ENCODE measurements at regions of chr17 and their contacts with region 1.

Region 1: DNA sequence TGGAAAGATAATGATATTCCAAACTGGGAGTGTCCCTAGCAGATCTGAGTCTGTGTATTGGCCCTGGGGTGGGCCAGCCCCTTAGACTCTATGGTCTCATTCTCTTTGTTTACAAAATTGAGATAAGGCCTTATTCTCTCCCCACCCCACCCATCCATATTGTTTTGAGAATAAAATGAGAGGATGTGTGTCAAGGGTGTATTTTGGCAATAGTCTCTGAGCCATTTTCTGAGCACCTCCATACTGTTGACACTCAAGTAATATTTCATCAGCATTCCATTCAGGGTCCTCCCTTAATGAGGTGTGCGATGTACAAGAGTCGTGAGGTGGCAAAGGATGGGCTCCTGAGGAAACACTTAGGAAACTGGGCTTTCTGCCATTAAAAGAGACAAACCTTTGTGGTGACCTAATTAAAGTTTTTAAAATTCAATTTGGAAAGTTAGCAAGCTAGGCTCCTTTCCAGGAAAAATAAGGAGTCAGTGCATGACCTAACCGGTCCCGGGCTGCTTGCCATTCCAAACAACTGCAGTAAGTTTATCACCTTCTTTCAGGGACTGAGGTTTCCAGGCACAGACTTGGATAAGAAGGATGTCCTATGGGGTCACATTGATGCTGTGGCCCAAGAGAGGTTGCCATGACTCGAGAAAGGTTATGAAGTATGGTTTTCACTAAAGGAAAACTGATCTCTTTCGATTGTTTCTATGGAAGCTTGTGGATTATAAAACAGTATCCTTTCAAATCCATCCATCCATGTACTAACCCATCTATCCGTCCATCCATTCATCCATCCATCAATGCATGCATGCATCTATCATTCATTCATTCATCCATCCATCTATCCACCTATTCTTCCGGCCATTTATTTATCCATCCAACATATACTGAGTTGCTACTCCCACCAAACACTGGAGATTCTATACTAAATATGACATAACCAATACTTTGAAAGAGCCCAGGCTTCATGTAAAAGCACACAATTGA is 443.3 kb downstream of the UTP18 start:
- DNase-seq: peak; percentile 69 to 82 (median 77)
- ATAC-seq: peak; percentile 78 to 92 (median 90)
- H3K4me3 ChIP-seq: no peak overlapping the region
- H3K27ac ChIP-seq: peak overlapping the region in 8 of 12 donors; percentile 27 to 71 (median 58)
- H3K4me1 ChIP-seq: peaks cover 0 to 20% (median 6%) of the 10 kb centered on the region in 12 donors
- H3K27me3 ChIP-seq: no peaks in the 10 kb centered on the region
- CTCF ChIP-seq: no peak
- POLR2A ChIP-seq: no peak

Region 2: GRCh38 chr17:51611585-51611984 is 92.1 kb before region 1 on chr17:
- intact Hi-C with region 1: loop called in 1 of 10 experiments (anchors 2 kb)
- DNase-seq: peak in 4 of 5 donors; percentile 28 to 37 (median 29)
- ATAC-seq: peak in 3 of 4 donors; percentile 26 to 92 (median 53)
- H3K4me3 ChIP-seq: no peak overlapping the region
- H3K27ac ChIP-seq: peak overlapping the region in 1 of 12 donors; percentile 2
- H3K4me1 ChIP-seq: peaks cover 0 to 17% (median 0%) of the 10 kb centered on the region in 12 donors
- H3K27me3 ChIP-seq: peaks cover 0 to under 1% (median 0%) of the 10 kb centered on the region in 9 donors
- CTCF ChIP-seq: no peak
- POLR2A ChIP-seq: no peak

Region 3: DNA sequence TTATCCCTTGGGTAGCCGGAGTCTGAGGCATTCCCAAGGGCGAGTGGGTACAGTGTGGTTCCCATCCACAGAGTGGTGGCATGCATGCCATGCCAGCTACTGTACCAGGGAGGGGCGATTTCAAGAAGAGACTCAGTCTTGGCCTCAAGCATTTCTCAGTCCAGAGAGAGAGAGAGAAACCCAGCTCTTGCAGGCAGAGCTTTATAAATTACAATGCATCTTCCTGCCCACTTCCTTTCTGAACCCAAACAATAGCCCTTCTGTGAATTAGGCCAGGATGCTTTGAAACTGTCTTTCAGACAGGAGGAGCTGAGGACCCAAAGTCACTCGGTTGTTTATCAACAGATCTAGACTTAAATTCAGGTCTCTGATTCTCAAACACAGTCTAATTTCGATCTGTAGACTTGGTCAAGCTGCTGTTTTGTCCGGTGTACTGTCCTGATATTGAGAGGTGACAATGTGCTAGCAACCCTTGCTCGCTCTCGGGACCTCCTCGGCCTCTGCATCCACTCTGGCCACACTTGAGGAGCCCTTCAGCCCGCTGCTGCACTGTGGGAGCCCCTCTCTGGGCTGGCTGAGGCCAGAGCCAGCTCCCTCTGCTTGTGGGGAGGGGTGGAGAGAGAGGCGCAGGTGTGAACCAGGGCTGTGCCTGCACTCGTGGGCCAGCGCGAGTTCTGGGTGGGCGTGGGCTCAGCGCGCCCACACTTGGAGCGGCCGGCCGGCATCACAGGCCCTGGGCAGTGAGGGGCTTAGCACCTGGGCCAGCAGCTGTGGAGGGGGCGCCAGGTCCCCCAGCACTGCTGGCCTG is 35.3 kb before region 1 on chr17:
- intact Hi-C with region 1: loop called in 1 of 10 experiments (anchors 1 kb)
- DNase-seq: no peak
- ATAC-seq: no peak
- H3K4me3 ChIP-seq: no peak overlapping the region
- H3K27ac ChIP-seq: no peak overlapping the region
- H3K4me1 ChIP-seq: peaks cover 0 to 7% (median 0%) of the 10 kb centered on the region in 12 donors
- H3K27me3 ChIP-seq: no peaks in the 10 kb centered on the region
- CTCF ChIP-seq: no peak
- POLR2A ChIP-seq: no peak

Measured in heart left ventricle (tissue), 16 donors.